ENCODE measurements at regions of chr1 and their contacts with region 1.

Region 1: GRCh38 chr1:19477284-19478249 is 7.8 kb downstream of the CAPZB start:
- DNase-seq: peak; percentile 87
- ATAC-seq: peak; percentile 87
- H3K4me3 Mint-ChIP-seq: peak overlapping the region; percentile 70
- H3K27ac Mint-ChIP-seq: peak overlapping the region; percentile 96
- H3K4me1 Mint-ChIP-seq: peaks cover 93% of the 10 kb centered on the region
- H3K27me3 Mint-ChIP-seq: no peaks in the 10 kb centered on the region
- CTCF ChIP-seq: no peak

Region 2: DNA sequence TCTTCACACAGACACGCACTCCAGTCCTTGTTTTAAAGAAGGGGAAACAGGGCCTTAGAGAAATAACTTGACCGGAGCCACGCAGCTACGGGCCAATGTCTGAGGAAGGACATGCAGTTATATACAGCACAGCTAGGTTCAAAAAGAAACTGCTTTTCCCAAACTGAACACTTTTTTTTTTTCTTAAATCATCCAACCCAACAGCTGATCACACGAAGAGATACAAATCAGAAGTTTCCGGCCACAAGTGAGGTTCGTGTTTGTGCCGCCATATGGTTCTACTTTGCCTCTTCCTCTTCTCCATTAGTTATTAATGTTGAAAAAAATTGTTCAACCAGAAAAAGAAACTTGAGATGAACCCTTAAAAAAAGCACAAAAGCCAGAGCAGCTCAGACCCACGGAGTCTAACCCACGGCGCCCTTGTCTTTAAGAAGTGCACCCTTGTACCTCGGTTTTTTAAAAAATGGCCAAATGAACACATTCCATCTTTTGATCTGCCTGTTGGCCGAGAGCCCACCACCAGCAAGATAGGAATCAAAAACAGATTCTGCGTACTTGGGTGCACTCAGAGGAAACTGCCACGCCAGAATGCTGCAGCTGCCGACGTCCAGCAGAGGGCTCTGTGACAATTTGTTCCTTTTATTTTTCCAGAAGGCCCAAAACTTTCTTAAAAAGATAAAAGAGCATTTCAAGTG is 86.5 kb before region 1 on chr1:
- CTCF ChIA-PET with region 1: interaction called, 5 read pairs
- POLR2A ChIA-PET with region 1: no interaction called
- intact Hi-C with region 1: loop called (anchors 10 kb)
- DNase-seq: peak; percentile 73
- ATAC-seq: peak; percentile 61
- H3K4me3 Mint-ChIP-seq: peak overlapping the region; percentile 61
- H3K27ac Mint-ChIP-seq: peak overlapping the region; percentile 92
- H3K4me1 Mint-ChIP-seq: peaks cover 70% of the 10 kb centered on the region
- H3K27me3 Mint-ChIP-seq: no peaks in the 10 kb centered on the region
- CTCF ChIP-seq: peak; percentile 94

Region 3: GRCh38 chr1:19439464-19440171 is 37.9 kb before region 1 on chr1:
- CTCF ChIA-PET with region 1: interaction called, 4 read pairs
- POLR2A ChIA-PET with region 1: interaction called, 3 read pairs
- intact Hi-C with region 1: loop called (anchors 5 kb)
- DNase-seq: peak; percentile 59
- ATAC-seq: peak; percentile 29
- H3K4me3 Mint-ChIP-seq: no peak overlapping the region
- H3K27ac Mint-ChIP-seq: peak overlapping the region; percentile 80
- H3K4me1 Mint-ChIP-seq: peaks cover 86% of the 10 kb centered on the region
- H3K27me3 Mint-ChIP-seq: no peaks in the 10 kb centered on the region
- CTCF ChIP-seq: peak; percentile 28

Region 4: DNA sequence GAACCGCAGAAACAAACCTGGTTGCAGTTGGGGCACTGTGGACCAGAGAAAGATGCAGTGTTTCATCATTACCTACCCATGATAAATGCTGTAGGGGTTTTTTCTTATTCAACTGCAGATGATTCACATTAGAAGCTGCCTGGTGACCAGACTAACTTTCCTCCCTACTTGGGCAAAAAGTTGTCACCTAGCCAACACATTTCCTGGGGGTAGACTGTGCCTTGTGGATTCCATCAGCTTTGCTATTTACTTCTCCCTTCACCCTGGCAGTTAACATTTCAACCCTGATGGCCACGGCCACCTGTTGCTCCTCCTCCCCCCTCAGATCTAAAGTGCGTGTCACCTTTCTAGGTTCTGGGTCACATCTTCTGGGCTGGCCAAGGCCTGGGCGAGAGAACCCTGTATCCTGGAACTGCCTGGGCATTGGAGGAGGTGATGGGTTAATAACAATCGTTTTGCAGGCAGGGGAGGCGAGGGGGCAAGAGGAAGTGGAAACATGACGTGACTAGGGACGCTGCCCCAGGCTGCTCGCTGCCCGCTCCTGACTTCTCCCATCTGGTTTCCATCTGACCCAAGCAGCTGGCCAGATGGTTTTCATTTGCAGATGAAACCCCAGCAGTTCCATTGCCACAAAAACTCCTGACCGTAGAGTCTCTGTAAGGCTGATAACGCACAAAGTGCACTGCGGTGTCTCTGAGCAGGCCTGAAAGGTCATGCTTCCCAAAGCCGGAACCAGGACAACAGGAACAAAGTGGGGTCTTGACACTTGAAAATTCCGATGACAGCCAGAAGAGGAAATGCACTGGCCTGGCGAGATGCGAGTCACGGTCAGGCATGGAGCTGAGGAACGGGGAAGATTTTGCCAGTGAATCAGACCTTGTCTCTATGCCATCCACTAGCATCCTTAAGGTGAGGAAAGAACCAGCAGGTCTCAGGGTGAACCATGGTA is 28.8 kb before region 1 on chr1:
- CTCF ChIA-PET with region 1: interaction called, 7 read pairs
- POLR2A ChIA-PET with region 1: interaction called, 10 read pairs
- intact Hi-C with region 1: loop called (anchors 5 kb)
- DNase-seq: peak; percentile 71
- ATAC-seq: peak; percentile 85
- H3K4me3 Mint-ChIP-seq: peak overlapping the region; percentile 26
- H3K27ac Mint-ChIP-seq: peak overlapping the region; percentile 92
- H3K4me1 Mint-ChIP-seq: peaks cover 86% of the 10 kb centered on the region
- H3K27me3 Mint-ChIP-seq: no peaks in the 10 kb centered on the region
- CTCF ChIP-seq: no peak

Region 5: GRCh38 chr1:19514391-19514831 is 36.8 kb after region 1 on chr1:
- CTCF ChIA-PET with region 1: no interaction called
- POLR2A ChIA-PET with region 1: no interaction called
- intact Hi-C with region 1: no loop called
- DNase-seq: no peak
- ATAC-seq: no peak
- H3K4me3 Mint-ChIP-seq: no peak overlapping the region
- H3K27ac Mint-ChIP-seq: no peak overlapping the region
- H3K4me1 Mint-ChIP-seq: peaks cover 10% of the 10 kb centered on the region
- H3K27me3 Mint-ChIP-seq: no peaks in the 10 kb centered on the region
- CTCF ChIP-seq: no peak

Region 6: GRCh38 chr1:19547814-19548213 is 70.2 kb after region 1 on chr1:
- CTCF ChIA-PET with region 1: no interaction called
- POLR2A ChIA-PET with region 1: no interaction called
- intact Hi-C with region 1: no loop called
- DNase-seq: no peak
- ATAC-seq: no peak
- H3K4me3 Mint-ChIP-seq: no peak overlapping the region
- H3K27ac Mint-ChIP-seq: no peak overlapping the region
- H3K4me1 Mint-ChIP-seq: peaks cover 4% of the 10 kb centered on the region
- H3K27me3 Mint-ChIP-seq: peaks cover 4% of the 10 kb centered on the region
- CTCF ChIP-seq: no peak

Region 7: GRCh38 chr1:19563324-19564097 is 85.9 kb after region 1 on chr1:
- CTCF ChIA-PET with region 1: no interaction called
- POLR2A ChIA-PET with region 1: no interaction called
- intact Hi-C with region 1: no loop called
- DNase-seq: no peak
- ATAC-seq: no peak
- H3K4me3 Mint-ChIP-seq: no peak overlapping the region
- H3K27ac Mint-ChIP-seq: no peak overlapping the region
- H3K4me1 Mint-ChIP-seq: no peaks in the 10 kb centered on the region
- H3K27me3 Mint-ChIP-seq: no peaks in the 10 kb centered on the region
- CTCF ChIP-seq: no peak